Activated B cell treated with CpG ODN at 0.5 μM for 24 hours (primary cell): ENCODE measurements at regions of chr5 and their contacts with region 1.

Region 1: DNA sequence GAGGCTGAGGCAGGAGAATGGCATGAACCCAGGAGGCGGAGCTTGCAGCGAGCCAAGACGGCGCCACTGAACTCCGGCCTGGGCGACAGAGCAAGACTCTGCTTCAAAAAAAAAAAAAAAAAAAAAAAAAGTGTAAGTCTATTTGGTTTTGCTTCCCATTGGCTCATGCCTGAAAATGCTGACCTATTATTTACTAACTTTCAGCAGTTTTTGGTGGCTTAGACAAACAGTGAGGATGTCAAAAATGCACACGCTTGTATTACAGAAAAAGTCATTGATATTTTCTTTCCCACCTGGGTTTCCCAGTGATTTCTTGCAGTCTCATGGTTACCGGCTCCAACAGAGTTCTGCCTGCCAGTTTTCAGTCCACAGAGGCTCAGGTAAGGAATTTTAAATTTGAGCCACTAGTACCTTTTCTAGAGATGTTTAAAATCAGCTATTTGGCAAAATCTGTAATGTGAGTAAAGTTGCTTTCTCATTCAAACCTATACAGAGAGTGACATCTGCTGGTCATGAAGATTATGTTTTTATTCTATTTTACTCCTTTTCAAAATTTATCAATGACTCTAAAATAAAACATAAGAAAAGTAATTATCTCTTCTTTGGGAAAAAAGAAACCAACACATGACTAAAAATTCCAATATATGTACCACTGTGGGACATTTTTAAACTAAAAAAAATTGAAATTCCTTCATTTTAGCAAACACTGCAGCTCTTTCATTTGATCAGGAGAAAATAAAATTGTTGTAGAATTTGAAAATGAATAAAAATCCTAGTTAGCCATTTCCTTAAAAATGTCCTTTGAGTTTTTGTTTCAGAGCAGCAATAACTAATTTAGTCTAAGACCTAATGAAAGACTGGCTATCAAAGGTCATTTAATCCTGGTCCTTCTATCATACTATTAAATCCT is 8.8 kb downstream of the FAM200C start:
- DNase-seq: no peak
- ATAC-seq: no peak
- H3K4me3 Mint-ChIP-seq: no peak overlapping the region
- H3K27ac Mint-ChIP-seq: no peak overlapping the region
- H3K4me1 Mint-ChIP-seq: no peaks in the 10 kb centered on the region
- H3K27me3 Mint-ChIP-seq: no peaks in the 10 kb centered on the region
- CTCF ChIP-seq: no peak

Region 2: GRCh38 chr5:160081495-160081894 is 309.5 kb before region 1 on chr5:
- CTCF ChIA-PET with region 1: interaction called, 10 read pairs
- POLR2A ChIA-PET with region 1: no interaction called
- intact Hi-C with region 1: loop called (anchors 1 kb)
- DNase-seq: no peak
- ATAC-seq: no peak
- H3K4me3 Mint-ChIP-seq: no peak overlapping the region
- H3K27ac Mint-ChIP-seq: no peak overlapping the region
- H3K4me1 Mint-ChIP-seq: peaks cover 2% of the 10 kb centered on the region
- H3K27me3 Mint-ChIP-seq: no peaks in the 10 kb centered on the region
- CTCF ChIP-seq: no peak

Region 3: DNA sequence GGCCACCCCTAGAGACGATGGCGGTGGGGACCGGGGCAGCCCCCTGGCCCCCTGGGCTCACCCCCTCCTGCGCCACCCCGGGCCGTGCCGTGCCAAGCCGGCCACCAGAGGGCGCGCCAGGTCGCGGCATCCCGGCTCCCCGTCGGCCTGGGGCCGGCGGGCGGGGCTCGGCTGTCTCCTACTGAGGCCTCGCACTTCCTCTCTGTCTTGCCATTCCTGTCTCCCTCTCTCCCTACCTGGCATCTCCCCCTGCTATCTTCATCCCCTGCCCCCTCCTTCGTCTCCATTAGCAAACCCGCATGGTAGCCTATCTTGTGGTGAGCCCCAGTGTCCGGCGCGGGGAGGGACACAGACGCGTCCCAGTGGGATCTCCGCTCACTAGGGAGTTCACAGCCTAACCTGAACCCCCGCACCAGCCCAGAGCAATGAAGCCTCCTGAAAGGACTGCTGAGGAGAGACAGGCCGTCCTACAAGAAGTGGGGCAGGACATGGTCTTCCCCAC is 191.6 kb before region 1 on chr5:
- CTCF ChIA-PET with region 1: no interaction called
- POLR2A ChIA-PET with region 1: no interaction called
- intact Hi-C with region 1: loop called (anchors 1 kb)
- DNase-seq: peak; percentile 78
- ATAC-seq: peak; percentile 96
- H3K4me3 Mint-ChIP-seq: peak overlapping the region; percentile 68
- H3K27ac Mint-ChIP-seq: no peak overlapping the region
- H3K4me1 Mint-ChIP-seq: peaks cover 6% of the 10 kb centered on the region
- H3K27me3 Mint-ChIP-seq: peaks cover 32% of the 10 kb centered on the region
- CTCF ChIP-seq: peak; percentile 55